Lower leg skin (tissue), 4 donors: ENCODE measurements at regions of chr2 and their contacts with region 1.

Region 1: DNA sequence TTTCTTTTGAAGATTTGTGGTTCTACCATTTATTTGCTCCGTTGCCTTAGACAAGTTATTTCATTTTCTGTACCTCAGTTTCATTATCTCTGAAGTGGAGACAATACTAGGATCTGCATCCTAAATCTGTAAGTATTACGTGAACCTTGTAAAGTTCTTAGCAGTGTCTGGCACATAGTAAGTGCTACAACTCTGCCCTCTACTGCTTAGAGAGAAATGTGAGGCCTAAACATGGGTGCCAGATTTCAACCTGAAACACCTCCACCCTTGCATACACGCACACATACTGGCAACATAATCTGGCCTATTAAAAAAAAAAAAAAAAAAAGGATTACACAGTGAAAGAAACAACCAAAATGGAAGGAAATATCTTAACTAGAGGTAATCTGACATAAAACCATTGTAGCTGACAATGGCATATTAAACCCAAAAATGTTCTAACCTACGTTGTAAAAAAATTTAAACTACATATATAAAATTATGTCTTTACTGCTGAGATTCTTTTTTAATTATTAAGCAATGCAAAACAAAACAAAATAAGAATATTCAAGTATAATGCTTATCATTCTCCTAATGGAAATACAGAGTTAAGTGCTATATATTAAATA is 132.6 kb downstream of the MAP2 start:
- DNase-seq: no peak
- H3K4me3 ChIP-seq: no peak overlapping the region
- CTCF ChIP-seq: no peak
- POLR2A ChIP-seq: no peak

Region 2: GRCh38 chr2:209423562-209424198 is 132.8 kb before region 1 on chr2 and contains the start of gene MAP2:
- intact Hi-C with region 1: loop called (anchors 10 kb)
- DNase-seq: peak; percentile 55 to 95
- H3K4me3 ChIP-seq: peak within 1 kb of the TSS; percentile 66
- CTCF ChIP-seq: no peak
- POLR2A ChIP-seq: no peak
- total RNA-seq, gene MAP2: 35.1 to 47.8 (median 40.9) TPM